OCI-LY7 (cell line): ENCODE measurements at regions of chr16 and their contacts with region 1.

Region 1: DNA sequence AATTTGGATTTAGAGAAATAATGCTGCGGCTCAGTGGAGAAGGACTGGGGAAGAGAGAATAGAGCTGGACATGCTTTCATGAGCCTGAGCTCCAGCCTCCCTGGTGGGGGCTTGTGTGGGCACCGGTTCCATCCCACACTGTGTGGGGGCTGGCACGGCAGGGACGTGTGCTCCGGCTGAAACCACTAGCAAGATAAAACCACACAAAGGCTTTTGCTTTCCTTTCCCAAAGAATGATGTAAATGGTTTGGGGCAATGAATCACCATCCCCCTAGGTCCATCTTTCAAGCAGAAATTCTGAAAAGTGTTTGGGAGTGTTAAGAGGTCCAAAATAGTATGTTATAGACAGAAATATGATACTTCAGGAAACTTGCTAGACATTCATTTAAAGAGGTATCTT is 77.0 kb downstream of the CDH11 start:
- DNase-seq: no peak
- H3K4me3 ChIP-seq: no peak overlapping the region
- H3K27ac ChIP-seq: no peak overlapping the region
- H3K4me1 ChIP-seq: no peaks in the 10 kb centered on the region
- CTCF ChIP-seq: no peak

Region 2: GRCh38 chr16:64919929-64920607 is 124.8 kb before region 1 on chr16:
- CTCF ChIA-PET with region 1: no interaction called
- POLR2A ChIA-PET with region 1: no interaction called
- intact Hi-C with region 1: no loop called
- DNase-seq: no peak
- H3K4me3 ChIP-seq: no peak overlapping the region
- H3K27ac ChIP-seq: no peak overlapping the region
- H3K4me1 ChIP-seq: no peaks in the 10 kb centered on the region
- CTCF ChIP-seq: no peak

Region 3: DNA sequence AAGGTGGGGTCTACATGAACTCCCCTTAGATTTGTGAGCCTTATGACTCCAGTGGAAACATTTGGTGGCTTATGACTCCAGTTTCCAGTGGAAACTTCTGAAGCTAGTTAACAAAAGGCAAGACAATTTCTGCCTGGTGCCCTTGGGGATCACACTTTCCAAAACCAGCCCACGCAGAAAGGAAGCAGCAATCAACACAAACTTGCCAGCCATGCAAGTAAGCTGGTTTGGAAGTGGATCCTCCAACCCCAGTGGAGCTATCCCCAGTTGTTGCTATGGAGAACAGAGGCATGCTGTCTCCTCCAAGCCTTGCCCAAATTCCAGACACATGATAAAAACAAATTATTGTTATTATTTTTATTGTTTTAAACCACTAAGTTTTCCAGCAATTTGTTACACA is 53.9 kb before region 1 on chr16:
- CTCF ChIA-PET with region 1: no interaction called
- POLR2A ChIA-PET with region 1: no interaction called
- intact Hi-C with region 1: loop called (anchors 10 kb)
- DNase-seq: no peak
- H3K4me3 ChIP-seq: no peak overlapping the region
- H3K27ac ChIP-seq: no peak overlapping the region
- H3K4me1 ChIP-seq: no peaks in the 10 kb centered on the region
- CTCF ChIP-seq: no peak